ENCODE measurements at regions of chr9 and their contacts with region 1.

Region 1: GRCh38 chr9:98168941-98169488 is 23.4 kb downstream of the CORO2A start:
- DNase-seq: peak; percentile 85
- ATAC-seq: peak; percentile 94
- H3K4me3 ChIP-seq: no peak overlapping the region
- H3K27ac ChIP-seq: peak overlapping the region; percentile 21
- H3K4me1 ChIP-seq: peaks cover 63% of the 10 kb centered on the region
- H3K27me3 ChIP-seq: no peaks in the 10 kb centered on the region
- CTCF ChIP-seq: no peak; the same call in 1 of the 2 replicates
- EP300 ChIP-seq: peak in 1 of 2 experiments; percentile 58; a peak in 1 of 4 replicates
- POLR2A ChIP-seq: no peak
- RAD21 ChIP-seq: no peak

Region 2: DNA sequence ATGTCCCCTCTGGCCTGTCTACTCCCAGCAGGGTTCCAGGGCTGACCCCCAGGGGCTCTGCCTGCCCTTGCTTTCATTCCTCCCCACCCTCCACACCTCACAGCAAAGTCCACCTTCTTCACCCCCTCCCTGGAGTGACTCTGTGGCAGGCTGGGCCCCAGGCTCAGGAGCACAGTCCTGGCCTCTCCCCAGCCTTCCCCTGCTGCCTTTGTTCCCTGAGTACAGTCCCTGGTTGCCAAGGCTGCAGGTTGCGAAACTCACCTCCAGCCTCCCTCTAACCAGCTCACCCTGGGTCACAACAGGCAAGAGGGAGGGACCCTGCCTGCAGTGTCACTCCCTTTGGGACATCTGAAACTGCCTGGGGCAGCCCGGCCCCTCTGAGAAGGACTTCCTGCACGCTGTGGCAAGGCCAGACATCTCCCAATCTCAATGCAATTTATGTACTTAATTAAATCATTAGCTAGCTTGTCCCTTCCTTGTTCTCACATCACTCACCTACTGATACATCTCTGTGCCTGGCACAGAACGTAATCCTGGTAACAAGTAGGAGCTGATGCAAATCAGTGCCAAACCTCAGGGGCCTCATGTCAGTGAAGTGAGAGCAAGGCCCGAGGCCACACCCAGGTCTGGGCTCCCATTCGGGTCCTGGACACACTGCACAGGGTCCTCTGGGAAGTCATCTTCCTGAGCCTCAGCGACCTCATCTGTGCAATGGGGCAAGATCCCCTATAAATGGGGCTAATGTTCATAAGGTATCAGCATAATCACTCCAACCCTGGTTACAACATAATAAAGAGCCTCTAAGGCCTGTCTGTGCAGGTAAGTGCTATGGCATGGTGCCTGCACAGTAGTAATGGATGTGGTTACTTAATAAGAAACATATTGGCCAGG is 22.7 kb before region 1 on chr9:
- CTCF ChIA-PET with region 1: no interaction called
- POLR2A ChIA-PET with region 1: no interaction called
- in situ Hi-C with region 1: no loop called
- intact Hi-C with region 1: loop called (anchors 2 kb)
- DNase-seq: peak; percentile 94
- ATAC-seq: peak; percentile 96
- H3K4me3 ChIP-seq: peak overlapping the region in 1 of 3 experiments; percentile 37; a peak in 2 of 6 replicates
- H3K27ac ChIP-seq: peak overlapping the region; percentile 85
- H3K4me1 ChIP-seq: peaks cover 63% of the 10 kb centered on the region
- H3K27me3 ChIP-seq: no peaks in the 10 kb centered on the region
- CTCF ChIP-seq: peak; percentile 45
- EP300 ChIP-seq: peak; percentile 59 to 78; a peak in 2 of 4 replicates
- POLR2A ChIP-seq: peak in 1 of 2 experiments; percentile 59; a peak in 2 of 4 replicates
- RAD21 ChIP-seq: no peak; the same call in 1 of the 2 replicates

Region 3: GRCh38 chr9:98158071-98158831 is 10.8 kb before region 1 on chr9:
- CTCF ChIA-PET with region 1: no interaction called
- POLR2A ChIA-PET with region 1: no interaction called
- in situ Hi-C with region 1: no loop called
- intact Hi-C with region 1: loop called (anchors 1 kb)
- DNase-seq: peak; percentile 88
- ATAC-seq: peak; percentile 98
- H3K4me3 ChIP-seq: no peak overlapping the region
- H3K27ac ChIP-seq: no peak overlapping the region
- H3K4me1 ChIP-seq: peaks cover 42% of the 10 kb centered on the region
- H3K27me3 ChIP-seq: no peaks in the 10 kb centered on the region
- CTCF ChIP-seq: no peak
- EP300 ChIP-seq: peak in 1 of 2 experiments; percentile 65; a peak in 1 of 4 replicates
- POLR2A ChIP-seq: no peak
- RAD21 ChIP-seq: 0 out of 2 replicates have a peak, but pooled peaks have one; percentile 26

Region 4: GRCh38 chr9:98635374-98635773 is 466.4 kb after region 1 on chr9:
- CTCF ChIA-PET with region 1: no interaction called
- POLR2A ChIA-PET with region 1: no interaction called
- in situ Hi-C with region 1: no loop called
- intact Hi-C with region 1: no loop called
- DNase-seq: no peak
- ATAC-seq: no peak
- H3K4me3 ChIP-seq: no peak overlapping the region
- H3K27ac ChIP-seq: no peak overlapping the region
- H3K4me1 ChIP-seq: no peaks in the 10 kb centered on the region
- H3K27me3 ChIP-seq: peaks cover under 1 to 5% of the 10 kb centered on the region in 2 experiments; a peak in 3 of 5 replicates
- CTCF ChIP-seq: no peak
- EP300 ChIP-seq: no peak
- POLR2A ChIP-seq: no peak
- RAD21 ChIP-seq: no peak